ENCODE measurements at regions of chr10 and their contacts with region 1.

Region 1: GRCh38 chr10:19970717-19971116 is 154.5 kb downstream of the PLXDC2 start:
- DNase-seq: no peak
- H3K4me3 ChIP-seq: no peak overlapping the region
- H3K27ac ChIP-seq: peak overlapping the region; percentile 75
- H3K4me1 ChIP-seq: peaks cover 24% of the 10 kb centered on the region
- H3K27me3 ChIP-seq: no peaks in the 10 kb centered on the region
- CTCF ChIP-seq: no peak

Region 2: DNA sequence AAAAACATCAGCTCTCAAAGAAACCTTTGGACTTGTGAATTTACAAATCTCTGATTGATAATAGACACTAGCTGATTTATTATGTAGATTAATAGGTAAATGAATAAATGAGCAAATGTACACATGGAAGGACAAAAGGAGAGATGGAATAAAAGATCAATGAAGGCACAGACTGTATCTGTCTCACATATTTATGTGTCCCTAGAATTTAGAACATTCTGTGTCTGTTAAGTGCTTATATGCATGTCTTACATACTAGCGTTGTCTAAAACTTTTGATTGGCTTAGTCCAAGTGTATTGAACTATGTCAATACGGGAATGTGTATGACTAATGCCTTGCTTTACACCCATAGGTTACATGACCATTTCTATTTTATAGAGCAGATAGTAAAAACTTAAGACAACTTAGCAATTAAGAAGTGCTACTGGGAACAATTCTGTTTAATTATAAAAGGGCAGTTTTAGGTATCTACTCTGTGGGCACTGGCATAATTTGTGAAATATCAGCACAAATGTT is 14.1 kb before region 1 on chr10:
- CTCF ChIA-PET with region 1: no interaction called
- dilution Hi-C with region 1: no loop called
- in situ Hi-C with region 1: no loop called
- intact Hi-C with region 1: loop called (anchors 1 kb)
- DNase-seq: no peak
- H3K4me3 ChIP-seq: no peak overlapping the region
- H3K27ac ChIP-seq: no peak overlapping the region
- H3K4me1 ChIP-seq: peaks cover 15% of the 10 kb centered on the region
- H3K27me3 ChIP-seq: no peaks in the 10 kb centered on the region
- CTCF ChIP-seq: no peak